Ascending aorta (tissue), 2 donors: ENCODE measurements at regions of chr3 and their contacts with region 1.

Region 1: GRCh38 chr3:151660885-151661284 is 72.8 kb upstream of the AADACL2 start:
- DNase-seq: no peak
- H3K4me3 ChIP-seq: no peak overlapping the region
- H3K27ac ChIP-seq: no peak overlapping the region
- H3K4me1 ChIP-seq: no peaks in the 10 kb centered on the region
- H3K27me3 ChIP-seq: no peaks in the 10 kb centered on the region
- CTCF ChIP-seq: peak in 1 of 3 experiments; percentile 40

Region 2: GRCh38 chr3:150945226-150946032 is 715.5 kb before region 1 on chr3:
- intact Hi-C with region 1: no loop called
- DNase-seq: no peak
- H3K4me3 ChIP-seq: no peak overlapping the region
- H3K27ac ChIP-seq: no peak overlapping the region
- H3K4me1 ChIP-seq: no peaks in the 10 kb centered on the region
- H3K27me3 ChIP-seq: no peaks in the 10 kb centered on the region
- CTCF ChIP-seq: no peak

Region 3: DNA sequence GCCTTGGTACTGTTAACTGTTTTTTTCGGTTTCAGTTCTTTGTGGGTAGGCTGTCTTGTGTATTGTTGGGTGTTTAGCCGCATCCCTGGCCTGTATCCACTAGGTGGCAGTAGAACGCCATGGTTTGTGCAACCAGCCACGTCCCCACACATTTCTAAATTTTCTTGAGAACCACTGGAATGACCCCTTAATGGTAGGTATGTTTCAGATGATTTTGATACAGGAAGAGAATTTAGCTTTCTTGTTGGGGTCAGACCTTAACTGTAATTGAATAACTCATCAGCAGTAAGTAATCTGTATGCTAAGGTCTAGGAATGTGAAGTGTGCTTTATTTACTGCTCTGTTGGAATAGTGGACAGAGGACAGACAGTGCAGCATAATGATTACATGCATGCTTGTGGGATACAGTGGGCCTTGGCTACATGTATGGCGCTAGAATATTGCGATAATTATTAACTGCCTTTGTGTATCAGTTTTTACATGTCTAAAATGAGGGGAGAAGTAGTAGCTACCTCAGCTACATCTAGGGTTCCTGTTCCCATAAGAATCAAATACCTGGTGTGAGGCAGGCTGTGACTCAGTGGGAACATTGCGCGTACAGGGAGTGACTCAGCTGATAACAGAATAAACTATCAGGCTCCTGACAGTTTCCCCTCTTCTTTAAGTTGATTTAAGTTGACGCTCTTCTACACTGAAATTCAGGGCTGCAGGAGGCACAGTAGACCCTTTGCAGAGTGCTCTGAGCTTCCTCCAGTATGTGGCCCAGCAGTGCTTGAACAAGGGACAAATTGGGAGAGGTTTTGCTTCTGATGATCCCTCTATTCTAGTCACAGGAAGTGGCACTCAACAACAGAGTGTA is 432.8 kb before region 1 on chr3:
- intact Hi-C with region 1: loop called (anchors 5 kb)
- DNase-seq: peak; percentile 14 to 80
- H3K4me3 ChIP-seq: no peak overlapping the region
- H3K27ac ChIP-seq: peak overlapping the region in 1 of 2 donors; percentile 5
- H3K4me1 ChIP-seq: peaks cover 6 to 8% of the 10 kb centered on the region in 2 donors
- H3K27me3 ChIP-seq: no peaks in the 10 kb centered on the region
- CTCF ChIP-seq: peak; percentile 83 to 88 (median 86)

Region 4: GRCh38 chr3:151439652-151440129 is 221.2 kb before region 1 on chr3:
- intact Hi-C with region 1: loop called (anchors 1 kb)
- DNase-seq: no peak
- H3K4me3 ChIP-seq: no peak overlapping the region
- H3K27ac ChIP-seq: no peak overlapping the region
- H3K4me1 ChIP-seq: no peaks in the 10 kb centered on the region
- H3K27me3 ChIP-seq: no peaks in the 10 kb centered on the region
- CTCF ChIP-seq: peak; percentile 73 to 81 (median 79)

Region 5: GRCh38 chr3:151468284-151468917 is 192.5 kb before region 1 on chr3:
- intact Hi-C with region 1: loop called (anchors 2 kb)
- DNase-seq: no peak
- H3K4me3 ChIP-seq: no peak overlapping the region
- H3K27ac ChIP-seq: no peak overlapping the region
- H3K4me1 ChIP-seq: no peaks in the 10 kb centered on the region
- H3K27me3 ChIP-seq: no peaks in the 10 kb centered on the region
- CTCF ChIP-seq: peak; percentile 36 to 84 (median 71)

Region 6: DNA sequence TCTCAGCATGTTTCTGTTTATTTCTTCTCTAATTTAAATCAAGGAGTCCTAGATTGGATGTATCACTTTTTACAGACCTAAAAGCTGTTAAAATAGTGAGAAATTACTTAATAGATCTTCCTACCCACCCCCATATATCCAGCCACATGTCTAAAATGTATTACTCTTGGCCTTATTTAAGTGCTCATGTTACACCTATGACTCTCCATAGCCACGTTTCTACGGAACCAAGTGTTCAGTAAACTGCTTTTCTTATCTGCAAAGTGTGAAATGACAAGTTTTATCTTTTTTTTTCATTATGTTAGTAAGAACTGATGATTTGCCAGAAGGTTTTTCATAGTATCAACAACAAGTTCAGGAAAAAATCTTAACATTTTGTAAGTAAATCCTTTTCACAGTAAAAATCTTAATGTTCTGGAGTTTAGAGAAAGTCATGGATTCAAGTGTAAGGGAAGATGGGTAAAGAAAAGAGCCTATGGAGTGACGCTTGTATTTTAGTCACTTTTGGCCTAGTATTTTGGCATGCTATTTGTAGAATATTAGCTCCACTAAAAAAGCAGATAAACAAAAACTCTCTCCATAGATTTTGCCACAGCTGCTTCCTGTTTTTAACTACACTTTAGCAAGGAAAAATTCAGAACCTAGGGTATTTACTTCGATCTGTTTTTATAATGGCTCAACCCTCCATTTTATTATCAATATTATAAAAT is 158.8 kb before region 1 on chr3:
- intact Hi-C with region 1: no loop called
- DNase-seq: no peak
- H3K4me3 ChIP-seq: no peak overlapping the region
- H3K27ac ChIP-seq: peak overlapping the region; percentile 28 to 65
- H3K4me1 ChIP-seq: peaks cover 0 to 11% of the 10 kb centered on the region in 2 donors
- H3K27me3 ChIP-seq: no peaks in the 10 kb centered on the region
- CTCF ChIP-seq: no peak

Region 7: DNA sequence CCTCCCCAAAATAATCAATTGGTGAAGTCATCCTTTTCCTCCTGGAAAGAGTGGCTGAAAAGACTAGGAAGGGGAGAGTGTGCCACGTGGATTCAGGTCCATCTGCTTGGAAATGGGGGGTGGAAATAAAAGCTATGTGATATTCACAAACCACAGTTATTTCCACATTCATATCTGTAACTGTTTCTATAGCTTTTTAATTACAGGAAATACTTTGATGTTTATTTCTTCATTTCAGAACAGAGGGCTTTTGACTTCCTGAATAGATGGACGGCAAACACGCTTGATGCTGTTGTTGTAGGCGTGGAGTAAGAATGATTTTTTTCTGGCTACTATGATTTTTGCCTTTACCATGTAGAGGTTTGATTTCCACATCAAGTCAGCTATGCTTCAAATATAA is 83.0 kb after region 1 on chr3:
- intact Hi-C with region 1: no loop called
- DNase-seq: no peak
- H3K4me3 ChIP-seq: no peak overlapping the region
- H3K27ac ChIP-seq: no peak overlapping the region
- H3K4me1 ChIP-seq: no peaks in the 10 kb centered on the region
- H3K27me3 ChIP-seq: no peaks in the 10 kb centered on the region
- CTCF ChIP-seq: no peak

Region 8: GRCh38 chr3:151838583-151839312 is 177.9 kb after region 1 on chr3:
- intact Hi-C with region 1: loop called (anchors 10 kb)
- DNase-seq: peak in 1 of 2 donors; percentile 70
- H3K4me3 ChIP-seq: peak overlapping the region in 1 of 2 donors; percentile 41
- H3K27ac ChIP-seq: no peak overlapping the region
- H3K4me1 ChIP-seq: peaks cover 0 to 4% of the 10 kb centered on the region in 2 donors
- H3K27me3 ChIP-seq: no peaks in the 10 kb centered on the region
- CTCF ChIP-seq: peak; percentile 68 to 88 (median 78)

Region 9: DNA sequence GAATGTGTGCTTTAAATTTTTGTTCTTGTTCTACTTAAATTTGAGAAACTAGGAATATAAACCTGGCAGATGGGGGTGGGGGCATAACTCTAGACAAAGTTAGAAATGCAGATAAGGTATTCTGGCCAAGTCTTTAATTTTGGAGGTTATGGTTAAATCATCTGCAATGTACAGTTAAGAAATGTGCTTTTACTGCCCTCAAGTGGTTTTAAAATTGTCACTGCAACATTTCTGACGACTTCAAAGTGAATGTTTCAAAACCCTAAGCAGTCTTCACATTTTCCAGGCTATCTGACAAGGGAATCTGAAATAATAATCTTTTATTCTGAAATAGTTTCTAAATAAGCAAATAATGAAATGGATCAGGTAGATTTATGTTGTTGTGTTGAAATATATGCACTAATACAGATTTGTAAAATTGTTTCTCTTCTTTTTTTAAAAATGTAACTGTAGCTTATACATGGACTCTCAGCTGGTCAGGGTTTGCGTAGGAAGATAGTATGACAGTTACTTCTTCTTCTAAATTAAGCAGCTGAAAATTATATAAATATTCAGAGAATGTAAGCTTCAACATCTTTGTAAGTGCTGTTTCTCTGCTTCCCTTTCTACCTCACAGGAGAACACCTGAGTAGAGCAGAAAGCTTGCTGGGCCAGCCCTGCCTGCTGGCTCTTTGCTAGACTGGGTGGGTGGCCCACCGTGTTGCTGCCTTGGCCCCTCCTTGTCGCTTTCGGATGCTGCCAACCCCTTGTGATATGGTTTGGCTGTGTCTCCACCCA is 257.6 kb after region 1 on chr3:
- intact Hi-C with region 1: loop called (anchors 5 kb)
- DNase-seq: no peak
- H3K4me3 ChIP-seq: no peak overlapping the region
- H3K27ac ChIP-seq: peak overlapping the region in 1 of 2 donors; percentile 35
- H3K4me1 ChIP-seq: peaks cover 0 to 6% of the 10 kb centered on the region in 2 donors
- H3K27me3 ChIP-seq: no peaks in the 10 kb centered on the region
- CTCF ChIP-seq: peak; percentile 56 to 73 (median 61)